H1 (cell line): ENCODE measurements at regions of chr2 and their contacts with region 1.

Region 1: DNA sequence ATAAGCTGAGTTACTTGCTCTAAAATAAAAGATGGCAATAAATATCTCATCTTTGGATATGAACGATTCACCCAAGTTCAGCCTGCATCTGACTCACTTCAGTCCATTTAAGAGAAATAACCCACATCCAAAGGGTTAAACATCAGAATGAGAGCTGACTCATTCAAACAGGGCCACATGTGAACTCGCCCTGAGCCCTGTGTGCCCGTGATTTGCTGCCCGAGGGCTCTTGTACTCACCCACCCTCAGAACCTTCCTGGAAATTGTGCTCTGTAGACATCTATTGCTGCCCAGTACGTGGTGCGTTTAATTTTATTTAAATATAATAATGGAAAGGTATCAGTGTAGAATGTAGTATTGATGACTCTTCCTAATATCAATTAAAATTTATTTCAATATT is 66.9 kb upstream of the RBM44 start:
- DNase-seq: no peak
- H3K4me3 ChIP-seq: no peak overlapping the region
- H3K27ac ChIP-seq: no peak overlapping the region
- H3K4me1 ChIP-seq: peaks cover 8 to 27% (median 20%) of the 10 kb centered on the region in 4 experiments
- H3K27me3 ChIP-seq: no peaks in the 10 kb centered on the region
- CTCF ChIP-seq: no peak
- EP300 ChIP-seq: no peak
- POLR2A ChIP-seq: no peak
- RAD21 ChIP-seq: no peak

Region 2: DNA sequence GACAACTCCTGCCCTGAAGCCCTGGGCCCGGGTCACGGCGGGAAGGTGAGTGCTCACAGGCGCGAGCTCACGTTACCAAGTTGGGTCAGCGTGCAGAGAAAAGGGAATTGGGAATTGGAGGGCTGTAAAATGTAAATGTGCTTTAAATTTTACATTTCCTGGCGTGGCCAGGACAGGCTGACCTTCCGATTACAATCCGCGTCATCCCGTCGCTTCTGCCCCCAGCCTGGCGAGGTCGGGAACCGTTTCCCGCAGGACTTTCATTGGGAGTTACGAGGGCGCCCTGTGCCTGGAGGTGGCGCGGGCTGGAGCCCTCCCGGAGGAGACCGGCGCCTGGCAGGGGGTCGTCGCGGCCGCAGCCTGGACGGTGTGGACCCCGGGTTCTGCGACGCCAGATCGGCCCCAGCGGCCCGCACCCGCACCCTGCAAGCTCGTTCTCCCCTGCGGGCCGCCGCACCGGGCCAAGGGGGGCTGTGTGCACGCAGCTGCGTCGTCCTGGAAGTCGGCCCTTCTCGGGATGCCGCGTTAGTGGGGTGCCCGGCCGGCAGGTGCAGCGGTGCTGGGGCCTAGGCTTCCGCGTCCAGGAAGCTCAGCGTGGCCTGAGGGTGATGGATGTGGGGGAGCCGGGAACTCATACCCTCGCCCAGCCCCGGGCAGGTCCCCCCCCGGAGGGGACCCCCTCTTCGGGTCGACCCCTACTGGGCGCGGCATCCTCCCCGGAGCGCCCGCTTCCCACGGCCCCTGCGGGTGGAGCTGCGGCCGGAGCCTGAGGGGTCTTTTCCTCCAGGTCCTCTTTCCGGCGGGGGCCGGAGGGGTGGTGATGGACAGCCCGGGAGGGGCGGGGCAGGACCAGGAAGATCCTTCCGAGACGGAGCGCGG is 40.4 kb before region 1 on chr2:
- CTCF ChIA-PET with region 1: interaction called, 11 read pairs
- POLR2A ChIA-PET with region 1: interaction called, 5 read pairs
- DNase-seq: peak in 1 of 2 experiments; percentile 99
- H3K4me3 ChIP-seq: peak overlapping the region; percentile 62 to 86 (median 68)
- H3K27ac ChIP-seq: no peak overlapping the region
- H3K4me1 ChIP-seq: peaks cover 6 to 15% (median 10%) of the 10 kb centered on the region in 4 experiments
- H3K27me3 ChIP-seq: peaks cover 0 to 9% (median 3%) of the 10 kb centered on the region in 4 experiments; a peak in 3 of 7 replicates
- CTCF ChIP-seq: no peak
- EP300 ChIP-seq: no peak
- POLR2A ChIP-seq: no peak
- RAD21 ChIP-seq: no peak

Region 3: DNA sequence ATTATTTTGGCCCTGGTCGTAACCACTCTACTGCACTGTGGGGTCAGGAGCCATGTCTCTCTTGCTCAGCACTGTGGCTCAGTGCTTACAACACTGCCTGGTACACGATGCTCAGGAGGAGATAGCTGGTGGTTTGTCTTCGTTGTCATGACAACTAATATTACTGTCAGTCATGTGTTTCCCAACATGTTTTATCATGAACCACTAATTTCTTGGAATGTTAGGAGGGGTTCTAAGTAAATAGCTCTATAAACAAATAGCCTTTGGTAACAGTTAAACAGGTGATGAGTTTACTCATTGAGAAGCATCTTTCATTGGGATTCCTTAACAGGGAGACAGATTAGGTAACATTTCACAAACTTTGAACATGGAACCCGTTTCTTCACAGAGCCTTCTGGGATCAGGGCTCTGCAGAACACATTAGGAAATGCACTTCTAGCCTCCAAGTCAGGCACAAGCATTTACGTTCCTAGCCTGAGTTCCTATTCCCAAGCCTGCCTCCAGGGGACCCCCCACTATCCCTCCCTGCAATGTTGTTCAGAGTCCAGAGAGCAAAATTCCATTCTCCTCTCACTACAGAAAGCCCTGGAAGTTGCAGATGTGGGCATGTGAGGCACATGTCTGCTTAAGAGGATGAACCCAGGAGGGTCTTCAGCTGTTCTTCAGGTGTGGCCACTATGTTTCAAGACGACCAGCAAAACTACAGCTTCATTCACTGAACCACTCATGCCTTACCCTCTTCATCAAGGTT is 60.5 kb after region 1 on chr2:
- CTCF ChIA-PET with region 1: no interaction called
- POLR2A ChIA-PET with region 1: no interaction called
- DNase-seq: peak; percentile 7 to 61
- H3K4me3 ChIP-seq: no peak overlapping the region
- H3K27ac ChIP-seq: no peak overlapping the region
- H3K4me1 ChIP-seq: no peaks in the 10 kb centered on the region
- H3K27me3 ChIP-seq: no peaks in the 10 kb centered on the region; a peak in 1 of 7 replicates
- CTCF ChIP-seq: peak; percentile 44 to 62 (median 52)
- EP300 ChIP-seq: no peak
- POLR2A ChIP-seq: no peak
- RAD21 ChIP-seq: peak; percentile 33 to 50